Heart left ventricle (tissue), 16 donors: ENCODE measurements at regions of chr3 and their contacts with region 1.

Region 1: GRCh38 chr3:111859974-111860859 is 1.2 kb downstream of the PHLDB2 start:
- DNase-seq: peak; percentile 78 to 86 (median 83)
- ATAC-seq: peak; percentile 68 to 80 (median 77)
- H3K4me3 ChIP-seq: peak overlapping the region; percentile 59 to 98 (median 86)
- H3K27ac ChIP-seq: peak overlapping the region; percentile 94 to 99 (median 96)
- H3K4me1 ChIP-seq: peaks cover 2 to 52% (median 40%) of the 10 kb centered on the region in 12 donors
- H3K27me3 ChIP-seq: peaks cover 0 to 10% (median 0%) of the 10 kb centered on the region in 9 donors
- CTCF ChIP-seq: peak; percentile 38 to 73 (median 58)
- POLR2A ChIP-seq: peak in 1 of 2 donors; percentile 65

Region 2: GRCh38 chr3:111723293-111724215 is 136.7 kb before region 1 on chr3:
- intact Hi-C with region 1: loop called in 6 of 10 experiments (anchors 5 kb)
- DNase-seq: no peak
- ATAC-seq: peak in 3 of 4 donors; percentile 34 to 71 (median 37)
- H3K4me3 ChIP-seq: no peak overlapping the region
- H3K27ac ChIP-seq: peak overlapping the region in 4 of 12 donors; percentile 6 to 40 (median 16)
- H3K4me1 ChIP-seq: peaks cover 0 to 23% (median 3%) of the 10 kb centered on the region in 12 donors
- H3K27me3 ChIP-seq: no peaks in the 10 kb centered on the region
- CTCF ChIP-seq: no peak
- POLR2A ChIP-seq: no peak

Region 3: DNA sequence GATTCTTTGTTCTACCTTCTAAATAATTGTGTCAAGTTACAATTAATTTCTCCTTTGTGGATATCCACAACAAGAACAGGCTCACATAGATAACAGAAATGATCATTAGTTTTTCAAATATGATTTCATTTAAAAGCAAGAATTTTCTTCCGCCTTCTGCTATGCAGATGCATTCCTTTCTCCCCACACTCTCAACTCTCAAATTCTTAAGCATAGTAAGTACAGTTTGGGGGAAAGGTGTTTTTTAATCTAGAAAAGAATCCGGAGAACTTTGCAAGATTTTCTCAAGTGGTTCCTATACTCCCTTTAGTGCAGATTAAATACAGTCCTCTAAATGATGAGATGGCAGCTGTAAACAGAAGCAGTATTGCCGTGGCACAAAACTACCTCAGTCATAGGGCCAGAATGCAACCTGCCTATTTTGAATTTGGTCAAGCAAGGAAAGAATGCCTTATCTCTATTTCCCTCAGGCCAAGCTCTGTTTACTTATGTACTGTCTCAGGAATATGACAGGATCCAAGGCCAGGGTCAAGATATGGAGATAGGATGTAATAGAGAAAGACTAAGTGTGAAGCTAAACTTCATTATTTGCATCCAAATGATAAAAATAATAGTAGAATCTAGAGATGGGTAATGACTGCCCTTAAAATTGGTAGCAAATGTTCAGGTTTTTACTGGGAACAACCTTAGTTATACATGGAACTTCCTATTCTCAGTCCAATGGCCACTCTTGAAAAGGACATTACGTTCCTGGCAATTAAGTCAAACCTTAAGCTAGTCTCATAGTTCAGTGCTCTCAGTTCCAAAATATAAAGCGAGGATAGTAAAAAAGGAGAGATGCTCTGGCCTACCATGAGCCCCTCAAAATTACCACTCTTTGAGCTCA is 78.4 kb before region 1 on chr3:
- intact Hi-C with region 1: loop called in 2 of 10 experiments (anchors 5 to 10 kb)
- DNase-seq: no peak
- ATAC-seq: peak in 2 of 4 donors; percentile 7 to 66
- H3K4me3 ChIP-seq: no peak overlapping the region
- H3K27ac ChIP-seq: peak overlapping the region in 11 of 12 donors; percentile 4 to 73 (median 51)
- H3K4me1 ChIP-seq: peaks cover 0 to 50% (median 18%) of the 10 kb centered on the region in 12 donors
- H3K27me3 ChIP-seq: no peaks in the 10 kb centered on the region
- CTCF ChIP-seq: no peak
- POLR2A ChIP-seq: no peak

Region 4: GRCh38 chr3:111904376-111905241 is 44.4 kb after region 1 on chr3:
- intact Hi-C with region 1: loop called in 1 of 10 experiments (anchors 5 kb)
- DNase-seq: no peak
- ATAC-seq: peak; percentile 31 to 91 (median 80)
- H3K4me3 ChIP-seq: no peak overlapping the region
- H3K27ac ChIP-seq: peak overlapping the region in 8 of 12 donors; percentile 10 to 71 (median 46)
- H3K4me1 ChIP-seq: peaks cover 0 to 75% (median 30%) of the 10 kb centered on the region in 12 donors
- H3K27me3 ChIP-seq: no peaks in the 10 kb centered on the region
- CTCF ChIP-seq: no peak
- POLR2A ChIP-seq: no peak

Region 5: GRCh38 chr3:111924283-111924682 is 64.1 kb after region 1 on chr3:
- intact Hi-C with region 1: loop called in 4 of 10 experiments (anchors 10 kb)
- DNase-seq: peak; percentile 69 to 83 (median 73)
- ATAC-seq: peak; percentile 95 to 98 (median 98)
- H3K4me3 ChIP-seq: no peak overlapping the region
- H3K27ac ChIP-seq: peak overlapping the region in 11 of 12 donors; percentile 12 to 76 (median 51)
- H3K4me1 ChIP-seq: peaks cover 0 to 46% (median 25%) of the 10 kb centered on the region in 12 donors
- H3K27me3 ChIP-seq: no peaks in the 10 kb centered on the region
- CTCF ChIP-seq: no peak
- POLR2A ChIP-seq: no peak

Region 6: GRCh38 chr3:111956995-111957734 is 96.9 kb after region 1 on chr3:
- intact Hi-C with region 1: no loop called
- DNase-seq: no peak
- ATAC-seq: no peak
- H3K4me3 ChIP-seq: no peak overlapping the region
- H3K27ac ChIP-seq: no peak overlapping the region
- H3K4me1 ChIP-seq: peaks cover 0 to 27% (median 9%) of the 10 kb centered on the region in 12 donors
- H3K27me3 ChIP-seq: no peaks in the 10 kb centered on the region
- CTCF ChIP-seq: no peak
- POLR2A ChIP-seq: no peak

Region 7: GRCh38 chr3:112086076-112086854 is 226.0 kb after region 1 on chr3 and contains the start of gene C3orf52:
- intact Hi-C with region 1: no loop called
- DNase-seq: peak; percentile 85 to 90 (median 88)
- ATAC-seq: peak; percentile 89 to 97 (median 96)
- H3K4me3 ChIP-seq: peak within 1 kb of the TSS; percentile 32 to 68 (median 60)
- H3K27ac ChIP-seq: peak within 1 kb of the TSS in 9 of 12 donors; percentile 3 to 83 (median 70)
- H3K4me1 ChIP-seq: peaks cover 0 to 32% (median 21%) of the 10 kb centered on the region in 12 donors
- H3K27me3 ChIP-seq: peaks cover 0 to 32% (median 0%) of the 10 kb centered on the region in 9 donors
- CTCF ChIP-seq: peak in 2 of 12 donors; percentile 15
- POLR2A ChIP-seq: peak in 1 of 2 donors; percentile 46
- total RNA-seq, gene C3orf52: 1.4 to 7.8 (median 4.9) TPM

Region 8: GRCh38 chr3:112437146-112438022 is 577.2 kb after region 1 on chr3:
- intact Hi-C with region 1: no loop called
- DNase-seq: no peak
- ATAC-seq: peak in 1 of 4 donors; percentile 29
- H3K4me3 ChIP-seq: no peak overlapping the region
- H3K27ac ChIP-seq: no peak overlapping the region
- H3K4me1 ChIP-seq: no peaks in the 10 kb centered on the region
- H3K27me3 ChIP-seq: no peaks in the 10 kb centered on the region
- CTCF ChIP-seq: peak in 4 of 12 donors; percentile 16 to 30 (median 22)
- POLR2A ChIP-seq: no peak